ENCODE measurements at regions of chr20 and their contacts with region 1.

Region 1: GRCh38 chr20:46330072-46330763 is 21.9 kb upstream of the CDH22 start:
- DNase-seq: no peak
- H3K4me3 ChIP-seq: no peak overlapping the region
- H3K27ac ChIP-seq: peak overlapping the region in 1 of 59 donors; percentile 93
- H3K27me3 ChIP-seq: peaks cover 0 to 7% (median 0%) of the 10 kb centered on the region in 45 donors
- CTCF ChIP-seq: no peak

Region 2: GRCh38 chr20:46013826-46014516 is 316.2 kb before region 1 on chr20:
- intact Hi-C with region 1: loop called in 1 of 2 experiments (anchors 10 kb)
- DNase-seq: peak in 1 of 10 donors; percentile 52
- H3K4me3 ChIP-seq: peak overlapping the region in 17 of 59 donors; percentile 10 to 46 (median 21)
- H3K27ac ChIP-seq: no peak overlapping the region
- H3K27me3 ChIP-seq: peaks cover 7 to 80% (median 60%) of the 10 kb centered on the region in 45 donors
- CTCF ChIP-seq: peak; percentile 18 to 82 (median 56)

Measured in dorsolateral prefrontal cortex (tissue), 120 donors.